ENCODE measurements at regions of chr12 and their contacts with region 1.

Region 1: GRCh38 chr12:96985480-96986362 is 78.7 kb downstream of the NEDD1 start:
- DNase-seq: no peak
- ATAC-seq: no peak
- H3K4me3 ChIP-seq: peak overlapping the region; percentile 28 to 56 (median 46)
- H3K27ac ChIP-seq: no peak overlapping the region
- H3K4me1 ChIP-seq: peaks cover 4 to 5% of the 10 kb centered on the region in 2 donors
- H3K27me3 ChIP-seq: peaks cover 6 to 11% (median 7%) of the 10 kb centered on the region in 3 donors
- CTCF ChIP-seq: peak; percentile 11 to 63 (median 43)
- POLR2A ChIP-seq: no peak

Region 2: GRCh38 chr12:96578526-96579125 is 407.1 kb before region 1 on chr12:
- in situ Hi-C with region 1: loop called in 1 of 4 experiments (anchors 25 kb)
- intact Hi-C with region 1: loop called (anchors 5 kb)
- DNase-seq: no peak
- ATAC-seq: no peak
- H3K4me3 ChIP-seq: no peak overlapping the region
- H3K27ac ChIP-seq: no peak overlapping the region
- H3K4me1 ChIP-seq: no peaks in the 10 kb centered on the region
- H3K27me3 ChIP-seq: no peaks in the 10 kb centered on the region
- CTCF ChIP-seq: peak in 3 of 5 experiments; percentile 27 to 42 (median 35)
- POLR2A ChIP-seq: no peak

Region 3: DNA sequence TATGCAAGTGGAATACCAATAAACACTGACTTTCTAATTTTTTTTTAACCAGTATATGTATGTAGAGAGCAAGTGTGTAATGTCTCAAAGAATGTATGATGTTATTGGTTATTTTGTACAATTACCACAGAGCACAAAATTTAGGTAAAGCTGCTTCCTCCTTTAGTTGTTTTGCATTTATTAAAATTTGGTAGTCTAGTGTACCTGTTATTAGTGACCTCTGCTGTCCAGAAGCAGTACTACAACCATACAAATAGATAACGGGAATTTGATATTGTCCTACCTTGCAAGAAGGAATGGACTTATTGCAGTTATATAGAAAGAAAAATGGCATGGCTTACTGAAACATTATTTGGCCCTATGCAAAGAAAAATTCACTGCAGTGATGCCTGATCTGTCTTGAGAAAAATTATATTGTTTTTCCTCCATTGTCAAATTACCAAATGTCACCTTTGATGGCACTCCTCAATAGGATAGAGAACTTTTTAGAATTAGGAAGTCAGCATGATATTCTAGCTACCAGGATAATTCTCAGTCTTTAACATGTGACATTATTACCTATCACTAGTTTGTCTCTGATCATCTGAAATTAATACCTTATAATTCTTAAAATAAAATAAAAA is 323.0 kb after region 1 on chr12:
- in situ Hi-C with region 1: no loop called
- intact Hi-C with region 1: loop called (anchors 5 kb)
- DNase-seq: no peak
- ATAC-seq: no peak
- H3K4me3 ChIP-seq: no peak overlapping the region
- H3K27ac ChIP-seq: no peak overlapping the region
- H3K4me1 ChIP-seq: peaks cover 0 to 4% of the 10 kb centered on the region in 2 donors
- H3K27me3 ChIP-seq: no peaks in the 10 kb centered on the region
- CTCF ChIP-seq: peak in 4 of 5 experiments; percentile 19 to 67 (median 54)
- POLR2A ChIP-seq: no peak

Region 4: GRCh38 chr12:97404543-97404942 is 418.8 kb after region 1 on chr12:
- in situ Hi-C with region 1: no loop called
- intact Hi-C with region 1: loop called (anchors 10 kb)
- DNase-seq: no peak
- ATAC-seq: no peak
- H3K4me3 ChIP-seq: no peak overlapping the region
- H3K27ac ChIP-seq: no peak overlapping the region
- H3K4me1 ChIP-seq: no peaks in the 10 kb centered on the region
- H3K27me3 ChIP-seq: no peaks in the 10 kb centered on the region
- CTCF ChIP-seq: peak in 2 of 5 experiments; percentile 31 to 44
- POLR2A ChIP-seq: no peak

Region 5: GRCh38 chr12:98397316-98398105 is 1411.8 kb after region 1 on chr12:
- in situ Hi-C with region 1: loop called in 2 of 4 experiments (anchors 25 kb)
- intact Hi-C with region 1: no loop called
- DNase-seq: peak; percentile 52 to 58
- ATAC-seq: peak; percentile 94 to 98
- H3K4me3 ChIP-seq: peak overlapping the region; percentile 27 to 53 (median 44)
- H3K27ac ChIP-seq: no peak overlapping the region
- H3K4me1 ChIP-seq: no peaks in the 10 kb centered on the region
- H3K27me3 ChIP-seq: no peaks in the 10 kb centered on the region
- CTCF ChIP-seq: peak; percentile 73 to 91 (median 80)
- POLR2A ChIP-seq: no peak